ENCODE measurements at regions of chr3 and their contacts with region 1.

Region 1: GRCh38 chr3:33717866-33718594 is at the start of gene CLASP2:
- DNase-seq: peak; percentile 89
- H3K4me3 ChIP-seq: peak within 1 kb of the TSS; percentile 90
- H3K4me3 Mint-ChIP-seq: no peak within 1 kb of the TSS
- H3K27ac Mint-ChIP-seq: no peak within 1 kb of the TSS
- H3K4me1 ChIP-seq: peaks cover 11% of the 10 kb centered on the region; the same call in 1 of the 2 replicates
- H3K4me1 Mint-ChIP-seq: no peaks in the 10 kb centered on the region
- H3K27me3 ChIP-seq: no peaks in the 10 kb centered on the region
- H3K27me3 Mint-ChIP-seq: no peaks in the 10 kb centered on the region
- CTCF ChIP-seq: no peak
- total RNA-seq, gene CLASP2: 65.6 and 66.3 TPM in 2 replicates

Region 2: DNA sequence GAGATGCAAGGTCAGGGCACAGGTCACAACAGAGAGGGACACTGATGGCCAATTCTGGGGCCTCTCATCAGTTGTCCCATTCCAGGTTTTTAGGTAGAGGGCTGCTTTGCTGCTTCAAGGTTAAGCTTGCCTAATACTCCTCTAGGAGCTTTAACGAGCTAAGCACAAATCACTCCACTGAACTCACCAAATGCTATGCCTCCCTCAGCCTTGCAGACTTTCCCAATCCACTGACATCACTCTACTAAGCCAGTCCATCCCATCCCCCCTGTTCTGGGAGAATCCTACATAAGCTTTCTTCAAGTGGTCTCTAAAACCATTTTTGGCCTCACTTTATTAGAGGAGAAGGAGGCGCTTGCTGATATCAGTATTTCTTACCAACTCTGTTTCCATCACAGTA is 55.6 kb after region 1 on chr3:
- CTCF ChIA-PET with region 1: no interaction called
- POLR2A ChIA-PET with region 1: no interaction called
- intact Hi-C with region 1: loop called (anchors 1 kb)
- DNase-seq: no peak
- H3K4me3 ChIP-seq: no peak overlapping the region
- H3K4me3 Mint-ChIP-seq: no peak overlapping the region
- H3K27ac Mint-ChIP-seq: no peak overlapping the region
- H3K4me1 ChIP-seq: no peaks in the 10 kb centered on the region
- H3K4me1 Mint-ChIP-seq: no peaks in the 10 kb centered on the region
- H3K27me3 ChIP-seq: no peaks in the 10 kb centered on the region
- H3K27me3 Mint-ChIP-seq: no peaks in the 10 kb centered on the region
- CTCF ChIP-seq: no peak

Measured in Caco-2 (cell line).